Esophagus muscularis mucosa (tissue), 4 donors: ENCODE measurements at regions of chr14 and their contacts with region 1.

Region 1: DNA sequence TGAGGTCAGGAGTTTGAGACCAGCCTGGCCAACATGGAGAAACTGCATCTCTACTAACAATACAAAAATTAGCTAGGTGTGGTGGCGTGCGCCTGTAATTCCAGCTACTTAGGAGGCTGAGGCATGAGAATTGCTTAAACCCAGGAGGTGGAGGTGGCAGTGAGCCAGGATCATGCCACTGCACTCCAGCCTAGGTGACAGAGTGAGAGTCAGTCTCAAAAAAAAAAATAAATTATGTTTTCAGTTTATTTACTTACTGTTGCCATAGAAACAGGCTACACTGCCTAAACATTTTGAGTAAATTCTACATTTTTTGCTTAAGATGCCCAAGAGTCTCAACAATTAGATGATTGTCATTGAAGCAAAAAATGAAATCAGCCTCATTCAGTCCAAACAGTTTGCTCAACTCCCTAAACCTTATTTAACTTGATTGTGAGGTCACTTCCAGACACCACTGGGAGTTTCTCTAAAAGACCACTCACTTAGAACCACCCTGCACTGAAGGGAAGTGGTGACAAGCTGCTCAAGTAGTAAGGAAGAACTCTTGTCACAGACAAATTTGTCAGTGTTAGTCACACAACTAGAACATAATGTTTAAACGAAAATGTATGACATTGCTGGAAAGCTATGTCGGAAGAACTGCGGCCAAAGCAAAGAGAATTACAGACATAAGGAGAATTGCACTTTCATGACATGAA is 9.8 kb upstream of the GNPNAT1 start:
- DNase-seq: no peak
- H3K4me3 ChIP-seq: no peak overlapping the region
- H3K27ac ChIP-seq: peak overlapping the region; percentile 65 to 77 (median 71)
- H3K4me1 ChIP-seq: peaks cover 0 to 23% (median 16%) of the 10 kb centered on the region in 4 donors
- H3K27me3 ChIP-seq: no peaks in the 10 kb centered on the region
- CTCF ChIP-seq: no peak
- EP300 ChIP-seq: peak; percentile 34
- POLR2A ChIP-seq: no peak

Region 2: GRCh38 chr14:52724360-52724644 is 76.9 kb before region 1 on chr14:
- intact Hi-C with region 1: no loop called
- DNase-seq: no peak
- H3K4me3 ChIP-seq: no peak overlapping the region
- H3K27ac ChIP-seq: no peak overlapping the region
- H3K4me1 ChIP-seq: peaks cover 0 to 7% (median under 1%) of the 10 kb centered on the region in 4 donors
- H3K27me3 ChIP-seq: no peaks in the 10 kb centered on the region
- CTCF ChIP-seq: no peak
- EP300 ChIP-seq: no peak
- POLR2A ChIP-seq: no peak

Region 3: DNA sequence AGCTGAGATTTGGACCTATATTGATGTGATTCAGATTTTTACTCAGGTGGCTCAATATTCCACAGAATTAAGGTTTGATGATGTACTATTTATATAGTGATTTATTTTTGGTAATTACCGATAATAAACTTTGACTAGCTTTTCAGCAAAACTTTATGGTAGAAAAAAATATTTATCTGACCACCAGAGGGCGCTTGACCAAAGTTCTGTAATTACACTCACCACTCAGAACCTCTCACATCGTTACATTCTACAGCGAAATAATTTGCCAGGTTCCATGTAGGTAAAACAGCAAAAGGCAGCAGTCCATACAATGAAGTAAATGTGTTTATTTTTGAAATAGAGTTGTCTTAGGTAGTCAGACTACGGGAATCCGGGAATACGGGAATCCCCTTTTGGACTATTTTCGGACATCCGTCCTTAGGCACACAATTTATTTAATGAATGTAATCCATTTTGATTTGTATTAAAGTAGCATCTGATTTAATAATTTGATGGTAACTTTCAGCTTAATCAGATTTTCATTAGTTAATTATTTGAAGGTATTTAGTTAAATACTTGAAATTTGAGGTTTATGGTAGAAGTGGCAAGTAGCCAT is 494.9 kb after region 1 on chr14:
- intact Hi-C with region 1: loop called (anchors 10 kb)
- DNase-seq: no peak
- H3K4me3 ChIP-seq: no peak overlapping the region
- H3K27ac ChIP-seq: no peak overlapping the region
- H3K4me1 ChIP-seq: no peaks in the 10 kb centered on the region
- H3K27me3 ChIP-seq: no peaks in the 10 kb centered on the region
- CTCF ChIP-seq: peak; percentile 56 to 71 (median 68)
- EP300 ChIP-seq: no peak
- POLR2A ChIP-seq: no peak

Region 4: DNA sequence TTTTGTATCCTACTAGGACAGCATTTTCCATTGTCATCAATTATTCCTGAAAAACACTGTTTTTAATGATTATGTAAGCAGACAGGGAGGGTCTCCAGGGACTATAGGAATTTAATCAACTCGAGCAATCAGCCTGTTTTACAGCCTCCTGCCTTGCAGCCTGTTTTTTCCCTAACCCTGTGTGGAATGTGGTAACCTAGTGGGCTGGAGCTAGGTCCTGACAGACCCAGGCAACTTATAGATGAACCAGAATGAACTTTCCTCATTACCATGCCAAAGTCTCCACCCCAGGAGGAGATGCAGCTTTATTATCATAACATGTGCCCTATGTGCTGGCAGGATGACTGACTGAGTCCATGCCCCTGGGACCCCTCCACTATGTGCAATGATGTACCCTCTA is 780.3 kb after region 1 on chr14:
- intact Hi-C with region 1: no loop called
- DNase-seq: no peak
- H3K4me3 ChIP-seq: no peak overlapping the region
- H3K27ac ChIP-seq: no peak overlapping the region
- H3K4me1 ChIP-seq: no peaks in the 10 kb centered on the region
- H3K27me3 ChIP-seq: no peaks in the 10 kb centered on the region
- CTCF ChIP-seq: no peak
- EP300 ChIP-seq: no peak
- POLR2A ChIP-seq: no peak